GM10248 (cell line): ENCODE measurements at regions of chr3 and their contacts with region 1.

Region 1: GRCh38 chr3:196609343-196609775 is 30.1 kb upstream of the NRROS start:
- DNase-seq: peak; percentile 89
- CTCF ChIP-seq: peak; percentile 74

Region 2: GRCh38 chr3:196596355-196596754 is 13.0 kb before region 1 on chr3:
- CTCF ChIA-PET with region 1: interaction called, 15 read pairs
- POLR2A ChIA-PET with region 1: interaction called, 3 read pairs
- DNase-seq: no peak
- CTCF ChIP-seq: no peak

Region 3: DNA sequence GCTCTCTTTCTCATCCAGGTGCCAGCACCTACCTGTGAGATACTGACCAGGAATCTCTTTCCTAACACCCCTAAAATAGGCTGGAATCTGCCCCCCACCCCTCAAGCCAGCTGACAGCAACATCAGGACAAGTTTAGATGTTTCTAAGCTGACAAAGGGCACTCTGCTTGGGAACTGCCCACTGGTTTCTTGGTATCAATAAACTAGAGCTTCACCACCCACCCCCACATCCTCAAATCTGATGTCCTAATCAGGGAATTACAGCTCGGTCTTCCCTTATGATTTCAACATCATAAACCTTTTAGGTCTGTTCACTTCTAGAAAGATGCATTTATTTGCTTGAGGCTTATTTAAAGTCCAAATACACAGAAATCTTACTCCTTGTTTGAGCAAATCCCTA is 68.0 kb after region 1 on chr3:
- CTCF ChIA-PET with region 1: interaction called, 24 read pairs
- POLR2A ChIA-PET with region 1: no interaction called
- DNase-seq: no peak
- CTCF ChIP-seq: no peak

Region 4: GRCh38 chr3:196684548-196685407 is 75.4 kb after region 1 on chr3:
- CTCF ChIA-PET with region 1: interaction called, 54 read pairs
- POLR2A ChIA-PET with region 1: no interaction called
- DNase-seq: peak; percentile 82
- CTCF ChIP-seq: peak; percentile 76